WTC11 (cell line): ENCODE measurements at regions of chr14 and their contacts with region 1.

Region 1: GRCh38 chr14:93906341-93907329 is 20.5 kb upstream of the FAM181A start:
- DNase-seq: peak; percentile 84
- ATAC-seq: peak; percentile 84
- H3K4me3 Mint-ChIP-seq: no peak overlapping the region
- H3K27ac Mint-ChIP-seq: no peak overlapping the region; the same call in 1 of the 2 replicates
- H3K4me1 Mint-ChIP-seq: peaks cover 20% of the 10 kb centered on the region
- H3K27me3 Mint-ChIP-seq: no peaks in the 10 kb centered on the region; the same call in 1 of the 2 replicates
- CTCF ChIP-seq: peak; percentile 72

Region 2: GRCh38 chr14:93648440-93649168 is 258.0 kb before region 1 on chr14:
- CTCF ChIA-PET with region 1: interaction called, 119 read pairs
- POLR2A ChIA-PET with region 1: no interaction called
- DNase-seq: peak; percentile 32
- ATAC-seq: peak; percentile 94
- H3K4me3 Mint-ChIP-seq: no peak overlapping the region
- H3K27ac Mint-ChIP-seq: no peak overlapping the region
- H3K4me1 Mint-ChIP-seq: no peaks in the 10 kb centered on the region
- H3K27me3 Mint-ChIP-seq: no peaks in the 10 kb centered on the region
- CTCF ChIP-seq: peak; percentile 31

Region 3: GRCh38 chr14:93688239-93688666 is 218.4 kb before region 1 on chr14:
- CTCF ChIA-PET with region 1: interaction called, 12 read pairs
- POLR2A ChIA-PET with region 1: no interaction called
- DNase-seq: peak; percentile 74
- ATAC-seq: peak; percentile 83
- H3K4me3 Mint-ChIP-seq: peak overlapping the region; percentile 50
- H3K27ac Mint-ChIP-seq: peak overlapping the region; percentile 90
- H3K4me1 Mint-ChIP-seq: peaks cover 76% of the 10 kb centered on the region
- H3K27me3 Mint-ChIP-seq: 0 out of 2 replicates have a peak, but pooled peaks cover 2% of the 10 kb centered on the region
- CTCF ChIP-seq: no peak

Region 4: GRCh38 chr14:93804646-93805045 is 102.0 kb before region 1 on chr14:
- CTCF ChIA-PET with region 1: interaction called, 39 read pairs
- POLR2A ChIA-PET with region 1: no interaction called
- DNase-seq: peak; percentile 78
- ATAC-seq: peak; percentile 96
- H3K4me3 Mint-ChIP-seq: no peak overlapping the region
- H3K27ac Mint-ChIP-seq: no peak overlapping the region
- H3K4me1 Mint-ChIP-seq: no peaks in the 10 kb centered on the region
- H3K27me3 Mint-ChIP-seq: no peaks in the 10 kb centered on the region
- CTCF ChIP-seq: peak; percentile 75

Region 5: GRCh38 chr14:93857500-93858283 is 48.9 kb before region 1 on chr14:
- CTCF ChIA-PET with region 1: interaction called, 11 read pairs
- POLR2A ChIA-PET with region 1: no interaction called
- DNase-seq: peak; percentile 17
- ATAC-seq: peak; percentile 76
- H3K4me3 Mint-ChIP-seq: no peak overlapping the region
- H3K27ac Mint-ChIP-seq: no peak overlapping the region
- H3K4me1 Mint-ChIP-seq: peaks cover 15% of the 10 kb centered on the region
- H3K27me3 Mint-ChIP-seq: peaks cover 5% of the 10 kb centered on the region; the same call in 1 of the 2 replicates
- CTCF ChIP-seq: no peak

Region 6: GRCh38 chr14:93892923-93893558 is 13.6 kb before region 1 on chr14:
- CTCF ChIA-PET with region 1: interaction called, 63 read pairs
- POLR2A ChIA-PET with region 1: no interaction called
- DNase-seq: peak; percentile 93
- ATAC-seq: peak; percentile 68
- H3K4me3 Mint-ChIP-seq: no peak overlapping the region
- H3K27ac Mint-ChIP-seq: no peak overlapping the region
- H3K4me1 Mint-ChIP-seq: peaks cover 43% of the 10 kb centered on the region
- H3K27me3 Mint-ChIP-seq: peaks cover 3% of the 10 kb centered on the region
- CTCF ChIP-seq: peak; percentile 100

Region 7: GRCh38 chr14:94269156-94269555 is 362.5 kb after region 1 on chr14:
- CTCF ChIA-PET with region 1: no interaction called
- POLR2A ChIA-PET with region 1: no interaction called
- DNase-seq: no peak
- ATAC-seq: no peak
- H3K4me3 Mint-ChIP-seq: no peak overlapping the region
- H3K27ac Mint-ChIP-seq: no peak overlapping the region
- H3K4me1 Mint-ChIP-seq: no peaks in the 10 kb centered on the region
- H3K27me3 Mint-ChIP-seq: no peaks in the 10 kb centered on the region
- CTCF ChIP-seq: no peak